Mammary epithelial cell (primary cell): ENCODE measurements at regions of chr19 and their contacts with region 1.

Region 1: DNA sequence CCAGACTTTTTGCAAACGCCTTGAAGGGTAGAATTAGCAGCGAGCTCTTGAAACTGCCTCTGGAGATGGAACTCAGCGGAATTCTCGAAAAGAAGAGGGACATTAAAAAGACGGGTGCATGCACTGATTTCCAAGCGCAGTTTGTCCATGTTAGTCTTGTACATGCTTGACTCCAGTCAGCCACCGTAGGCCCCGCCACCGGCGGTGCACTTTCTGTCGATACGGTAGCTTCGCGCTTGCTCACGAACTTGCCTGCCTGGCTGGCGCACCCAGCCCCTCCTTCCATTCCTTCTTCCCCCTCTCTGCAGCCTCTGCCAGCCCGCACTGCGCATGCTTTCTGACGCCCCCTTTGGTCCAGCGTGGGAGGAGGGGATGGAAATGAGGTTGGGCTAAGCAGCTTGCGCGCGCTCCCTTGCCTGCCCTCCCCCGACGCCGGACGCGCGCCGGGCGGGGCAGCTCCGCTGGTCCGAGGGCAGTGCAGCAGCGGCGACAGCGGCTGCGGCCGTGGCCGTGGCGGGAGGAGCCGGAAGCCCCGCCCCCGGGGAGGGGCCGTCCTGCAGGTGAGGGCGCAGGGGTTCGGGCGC is at the start of gene ZNF575:
- DNase-seq: peak; percentile 92
- H3K4me3 ChIP-seq: peak within 1 kb of the TSS; percentile 47 to 74 (median 48)
- H3K27ac ChIP-seq: peak within 1 kb of the TSS; percentile 19
- H3K4me1 ChIP-seq: peaks cover 26% of the 10 kb centered on the region
- H3K27me3 ChIP-seq: no peaks in the 10 kb centered on the region
- CTCF ChIP-seq: no peak
- total RNA-seq, gene ZNF575: 0.17 to 2.1 TPM

Region 2: GRCh38 chr19:43463381-43464136 is 69.5 kb before region 1 on chr19:
- CTCF ChIA-PET with region 1: no interaction called
- dilution Hi-C with region 1: no loop called
- in situ Hi-C with region 1: no loop called
- intact Hi-C with region 1: no loop called
- DNase-seq: peak; percentile 91
- H3K4me3 ChIP-seq: peak overlapping the region; percentile 32 to 79 (median 54)
- H3K27ac ChIP-seq: peak overlapping the region; percentile 53
- H3K4me1 ChIP-seq: peaks cover 37% of the 10 kb centered on the region
- H3K27me3 ChIP-seq: no peaks in the 10 kb centered on the region
- CTCF ChIP-seq: no peak

Region 3: DNA sequence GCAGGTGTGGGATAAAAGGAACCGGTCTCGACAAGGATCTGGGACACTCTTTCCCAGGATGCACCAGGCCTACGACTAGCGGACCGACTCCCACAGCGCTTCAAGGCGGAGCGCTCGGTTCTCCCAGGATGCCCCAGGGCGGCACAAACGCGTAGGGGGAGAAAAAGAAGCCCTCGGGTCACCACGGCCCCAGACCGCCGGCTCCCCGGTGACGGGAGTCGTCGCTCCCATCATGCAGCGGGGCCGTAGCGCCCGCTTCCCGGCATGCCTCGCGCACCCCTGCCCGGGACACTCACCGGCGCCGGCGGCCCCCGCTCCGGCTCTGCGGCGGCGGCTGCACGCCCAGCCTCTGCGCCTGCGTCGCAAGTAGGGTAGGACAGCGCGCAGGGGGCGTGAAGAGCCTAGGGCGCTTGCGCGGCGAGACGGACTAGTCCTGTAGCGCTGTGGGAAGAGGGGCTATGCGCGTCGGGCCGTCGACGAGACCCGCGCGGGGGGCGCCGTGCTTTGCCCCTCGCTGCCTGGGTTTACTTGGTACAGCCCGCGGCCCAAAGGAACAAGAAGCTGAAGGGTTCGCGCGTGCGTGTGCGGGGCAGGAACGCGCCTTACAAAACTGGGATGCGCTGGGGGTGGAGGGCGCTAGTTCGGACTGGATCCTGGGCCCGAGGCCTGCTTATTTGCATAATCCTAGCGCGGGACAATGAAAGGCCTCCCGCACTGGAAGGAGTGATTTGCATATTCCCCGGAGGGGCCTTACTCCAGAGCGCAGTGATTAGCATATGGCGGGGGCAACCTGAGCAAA is 86.4 kb after region 1 on chr19 and contains the start of gene ZNF428:
- CTCF ChIA-PET with region 1: no interaction called
- dilution Hi-C with region 1: loop called (anchors 5 kb)
- in situ Hi-C with region 1: no loop called
- intact Hi-C with region 1: no loop called
- DNase-seq: peak; percentile 76
- H3K4me3 ChIP-seq: peak within 1 kb of the TSS; percentile 41 to 84 (median 61)
- H3K27ac ChIP-seq: peak within 1 kb of the TSS; percentile 47
- H3K4me1 ChIP-seq: peaks cover 6% of the 10 kb centered on the region
- H3K27me3 ChIP-seq: no peaks in the 10 kb centered on the region
- CTCF ChIP-seq: no peak
- total RNA-seq, gene ZNF428: 17.0 to 19.0 TPM